ENCODE measurements at regions of chr1 and their contacts with region 1.

Region 1: DNA sequence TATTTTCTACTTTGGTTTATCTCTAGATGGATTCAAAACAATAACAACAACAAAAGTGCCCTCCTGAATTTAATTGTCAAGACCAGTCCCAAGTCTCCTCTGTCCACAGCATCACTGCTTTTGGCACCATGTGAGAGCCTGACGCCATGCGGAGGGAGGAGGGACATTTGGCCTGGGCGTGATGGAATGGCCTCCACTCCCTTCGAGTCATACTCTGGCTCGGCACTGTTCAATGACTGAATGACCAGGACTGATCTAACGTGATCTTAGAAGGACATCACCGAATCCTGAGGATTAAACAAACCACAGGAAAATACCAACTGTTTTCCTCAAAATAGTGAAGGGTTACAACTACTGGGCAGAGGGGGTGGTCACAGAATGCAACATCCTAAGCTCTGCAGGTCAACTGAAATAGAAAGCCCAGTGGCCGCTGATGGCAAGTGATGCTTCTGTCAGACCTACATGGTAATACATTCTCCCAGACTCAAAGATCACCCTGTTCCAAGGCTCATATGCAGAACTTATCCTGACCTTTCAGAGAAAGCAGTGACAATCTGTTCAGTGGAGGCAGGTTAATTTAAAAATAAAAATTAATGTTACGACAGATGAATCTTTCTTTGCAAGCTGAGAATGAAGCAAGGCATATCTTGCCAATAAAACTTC is 19.1 kb downstream of the SRSF4 start:
- DNase-seq: no peak
- H3K4me3 ChIP-seq: no peak overlapping the region
- CTCF ChIP-seq: no peak

Region 2: GRCh38 chr1:29105839-29106238 is 56.8 kb before region 1 on chr1:
- in situ Hi-C with region 1: loop called (anchors 10 kb)
- DNase-seq: no peak
- H3K4me3 ChIP-seq: no peak overlapping the region
- CTCF ChIP-seq: no peak